Lower lobe of right lung (tissue), 2 donors: ENCODE measurements at regions of chr4 and their contacts with region 1.

Region 1: DNA sequence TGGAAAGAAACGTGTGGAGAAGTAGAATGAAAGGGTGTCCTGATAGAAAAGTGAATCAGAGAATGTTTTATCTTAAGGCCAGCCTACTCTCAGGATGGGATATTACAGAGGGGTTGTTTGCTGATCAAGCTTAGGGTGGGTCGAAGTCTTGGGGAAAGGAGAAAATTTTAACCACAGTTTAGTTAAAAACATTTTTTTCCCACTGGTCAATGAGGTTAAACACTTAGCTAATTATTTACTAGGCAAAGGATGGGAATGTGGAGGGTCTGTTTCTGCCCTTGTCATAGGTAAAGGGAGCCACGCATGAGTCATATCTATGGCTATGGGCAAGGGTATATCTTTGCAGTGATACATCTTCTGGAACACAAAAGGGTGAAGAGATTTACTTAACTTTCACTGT is 16.1 kb upstream of the SULT1E1 start:
- DNase-seq: no peak
- ATAC-seq: no peak
- H3K4me3 ChIP-seq: no peak overlapping the region
- H3K27ac ChIP-seq: no peak overlapping the region
- H3K4me1 ChIP-seq: no peaks in the 10 kb centered on the region
- H3K27me3 ChIP-seq: no peaks in the 10 kb centered on the region
- CTCF ChIP-seq: no peak

Region 2: GRCh38 chr4:69689599-69689998 is 186.5 kb before region 1 on chr4:
- intact Hi-C with region 1: loop called (anchors 5 kb)
- DNase-seq: no peak
- ATAC-seq: peak; percentile 47 to 64
- H3K4me3 ChIP-seq: no peak overlapping the region
- H3K27ac ChIP-seq: no peak overlapping the region
- H3K4me1 ChIP-seq: no peaks in the 10 kb centered on the region
- H3K27me3 ChIP-seq: no peaks in the 10 kb centered on the region
- CTCF ChIP-seq: peak; percentile 52